BJ (cell line): ENCODE measurements at regions of chr6 and their contacts with region 1.

Region 1: GRCh38 chr6:37691904-37692806 is 5.5 kb downstream of the MDGA1 start:
- DNase-seq: no peak
- H3K4me3 ChIP-seq: no peak overlapping the region
- H3K27me3 ChIP-seq: peaks cover 5% of the 10 kb centered on the region
- CTCF ChIP-seq: peak; percentile 98

Region 2: GRCh38 chr6:37283671-37284151 is 408.4 kb before region 1 on chr6:
- CTCF ChIA-PET with region 1: no interaction called
- POLR2A ChIA-PET with region 1: no interaction called
- DNase-seq: no peak
- H3K4me3 ChIP-seq: no peak overlapping the region
- H3K27me3 ChIP-seq: no peaks in the 10 kb centered on the region
- CTCF ChIP-seq: no peak

Region 3: GRCh38 chr6:37366910-37367309 is 325.2 kb before region 1 on chr6:
- CTCF ChIA-PET with region 1: interaction called, 11 read pairs
- POLR2A ChIA-PET with region 1: no interaction called
- DNase-seq: no peak
- H3K4me3 ChIP-seq: no peak overlapping the region
- H3K27me3 ChIP-seq: no peaks in the 10 kb centered on the region
- CTCF ChIP-seq: no peak

Region 4: DNA sequence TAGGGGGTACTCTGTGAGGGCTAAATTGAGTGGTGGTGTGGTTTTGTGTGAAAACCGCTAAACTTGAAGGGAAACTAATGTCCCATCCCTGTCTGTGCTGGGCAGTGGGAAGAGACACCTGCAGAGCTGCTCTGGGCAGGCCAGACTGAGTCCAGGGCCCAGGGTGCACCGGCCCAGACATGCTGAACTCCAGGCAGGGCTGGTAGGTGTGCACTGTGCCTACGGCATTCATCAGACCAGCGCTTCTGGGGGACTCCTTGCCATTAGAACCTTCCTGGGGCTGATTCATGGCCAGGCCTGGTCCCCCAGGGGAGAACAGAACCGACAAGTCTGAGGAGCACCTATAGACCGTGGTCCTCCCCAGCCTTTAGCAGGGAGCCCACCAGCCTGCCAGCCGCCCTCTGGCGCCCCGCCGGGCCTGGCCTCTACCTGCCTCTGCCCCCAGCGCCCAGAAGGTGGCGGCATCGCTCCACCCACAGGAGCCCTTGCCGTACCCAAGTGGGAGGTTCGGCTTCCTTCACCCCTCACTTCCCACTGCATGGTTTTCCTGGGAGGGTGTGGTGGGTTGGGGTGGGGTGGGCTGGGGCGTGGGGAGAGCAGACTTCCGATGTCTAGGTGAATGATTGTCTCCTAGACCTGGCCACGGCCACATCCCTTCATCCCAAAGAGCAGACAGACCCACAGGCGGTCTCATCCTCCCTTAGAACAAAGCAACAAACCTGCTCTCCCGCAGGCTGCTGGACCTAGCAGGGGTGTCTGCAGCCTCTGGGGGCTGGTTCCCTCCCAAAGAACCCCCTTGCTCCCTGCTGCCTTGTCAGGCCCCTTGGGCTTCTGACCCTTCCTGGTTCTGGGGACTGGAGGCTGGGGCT is 208.0 kb before region 1 on chr6:
- CTCF ChIA-PET with region 1: interaction called, 13 read pairs
- POLR2A ChIA-PET with region 1: no interaction called
- DNase-seq: no peak
- H3K4me3 ChIP-seq: no peak overlapping the region
- H3K27me3 ChIP-seq: no peaks in the 10 kb centered on the region
- CTCF ChIP-seq: peak; percentile 84

Region 5: GRCh38 chr6:37566111-37566949 is 125.8 kb before region 1 on chr6:
- CTCF ChIA-PET with region 1: interaction called, 15 read pairs
- POLR2A ChIA-PET with region 1: no interaction called
- DNase-seq: no peak
- H3K4me3 ChIP-seq: peak overlapping the region; percentile 34
- H3K27me3 ChIP-seq: peaks cover 19% of the 10 kb centered on the region
- CTCF ChIP-seq: peak; percentile 82

Region 6: GRCh38 chr6:37673436-37673835 is 18.7 kb before region 1 on chr6:
- CTCF ChIA-PET with region 1: interaction called, 11 read pairs
- POLR2A ChIA-PET with region 1: no interaction called
- DNase-seq: no peak
- H3K4me3 ChIP-seq: no peak overlapping the region
- H3K27me3 ChIP-seq: peaks cover 6% of the 10 kb centered on the region; the same call in 1 of the 2 replicates
- CTCF ChIP-seq: no peak

Region 7: DNA sequence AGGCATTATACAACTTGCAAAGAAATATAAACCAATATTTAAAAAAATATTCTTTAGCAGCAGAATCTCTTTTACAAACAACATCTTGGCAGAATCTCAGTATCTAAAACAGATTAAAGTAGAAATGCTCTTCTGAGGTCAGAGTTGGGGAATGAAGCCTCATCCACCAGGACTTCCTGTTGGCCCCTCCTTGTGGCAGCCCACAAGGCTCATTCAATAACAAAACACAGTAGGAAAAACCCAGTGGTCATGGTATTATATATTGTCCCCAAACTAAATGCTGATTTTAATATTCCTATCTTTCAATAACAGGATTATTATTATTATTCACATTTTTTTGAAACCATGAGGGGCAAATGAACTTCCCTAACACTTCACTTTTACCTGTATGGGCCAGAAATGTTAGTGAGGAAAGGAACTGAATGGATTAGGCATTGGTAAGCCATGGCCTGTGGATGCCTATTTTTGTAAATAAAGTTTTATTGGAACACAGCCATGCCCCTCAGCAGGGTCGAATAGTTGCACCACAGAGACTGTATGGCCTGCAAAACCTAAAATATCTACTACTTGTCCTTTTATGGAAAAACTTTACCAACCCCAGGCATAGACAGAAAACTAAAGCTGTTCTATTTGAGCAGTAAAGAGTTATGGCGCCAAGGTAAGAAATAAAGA is 579.1 kb after region 1 on chr6:
- CTCF ChIA-PET with region 1: no interaction called
- POLR2A ChIA-PET with region 1: no interaction called
- DNase-seq: no peak
- H3K4me3 ChIP-seq: no peak overlapping the region
- H3K27me3 ChIP-seq: no peaks in the 10 kb centered on the region
- CTCF ChIP-seq: no peak